B cell (primary cell): ENCODE measurements at regions of chr10 and their contacts with region 1.

Region 1: DNA sequence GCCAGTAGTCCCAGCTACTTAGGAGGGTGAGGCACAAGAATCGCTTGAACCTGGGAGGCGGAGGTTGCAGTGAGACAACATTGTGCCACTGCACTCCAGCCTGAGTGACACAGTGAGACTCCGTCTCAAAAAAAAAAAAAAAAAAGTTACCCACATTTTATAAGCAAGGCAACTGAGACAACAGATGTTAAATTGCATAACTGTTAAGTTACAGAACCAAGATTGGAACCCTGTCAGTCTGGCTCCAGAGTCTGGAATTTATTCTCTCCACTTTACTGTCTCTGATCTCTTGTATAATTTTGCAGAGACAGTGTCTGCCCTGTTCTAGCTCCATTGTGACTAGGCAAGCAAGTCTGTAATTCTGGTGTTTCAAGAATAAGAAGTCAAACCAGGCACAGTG is 6.2 kb upstream of the ITGB1 start:
- DNase-seq: no peak
- ATAC-seq: no peak
- H3K4me3 ChIP-seq: no peak overlapping the region
- H3K4me3 Mint-ChIP-seq: no peak overlapping the region
- H3K27ac ChIP-seq: no peak overlapping the region
- H3K27ac Mint-ChIP-seq: no peak overlapping the region
- H3K4me1 ChIP-seq: peaks cover 16 to 22% of the 10 kb centered on the region in 2 donors
- H3K4me1 Mint-ChIP-seq: peaks cover 31% of the 10 kb centered on the region
- H3K27me3 ChIP-seq: no peaks in the 10 kb centered on the region
- H3K27me3 Mint-ChIP-seq: no peaks in the 10 kb centered on the region
- CTCF ChIP-seq: no peak

Region 2: GRCh38 chr10:32445740-32446535 is 518.3 kb before region 1 on chr10 and contains the start of gene CCDC7:
- CTCF ChIA-PET with region 1: no interaction called
- POLR2A ChIA-PET with region 1: no interaction called
- intact Hi-C with region 1: no loop called
- DNase-seq: peak; percentile 93
- ATAC-seq: peak; percentile 99
- H3K4me3 ChIP-seq: peak within 1 kb of the TSS; percentile 93 to 99 (median 98)
- H3K4me3 Mint-ChIP-seq: peak within 1 kb of the TSS; percentile 98
- H3K27ac ChIP-seq: peak within 1 kb of the TSS; percentile 95 to 99
- H3K27ac Mint-ChIP-seq: peak within 1 kb of the TSS; percentile 100
- H3K4me1 ChIP-seq: peaks cover 7 to 8% of the 10 kb centered on the region in 2 donors
- H3K4me1 Mint-ChIP-seq: peaks cover 13% of the 10 kb centered on the region
- H3K27me3 ChIP-seq: peaks cover 0 to 4% (median 0%) of the 10 kb centered on the region in 4 experiments
- H3K27me3 Mint-ChIP-seq: peaks cover 16% of the 10 kb centered on the region
- CTCF ChIP-seq: peak; percentile 65
- total RNA-seq, gene CCDC7: 23.5 and 26.6 TPM in 2 replicates

Region 3: DNA sequence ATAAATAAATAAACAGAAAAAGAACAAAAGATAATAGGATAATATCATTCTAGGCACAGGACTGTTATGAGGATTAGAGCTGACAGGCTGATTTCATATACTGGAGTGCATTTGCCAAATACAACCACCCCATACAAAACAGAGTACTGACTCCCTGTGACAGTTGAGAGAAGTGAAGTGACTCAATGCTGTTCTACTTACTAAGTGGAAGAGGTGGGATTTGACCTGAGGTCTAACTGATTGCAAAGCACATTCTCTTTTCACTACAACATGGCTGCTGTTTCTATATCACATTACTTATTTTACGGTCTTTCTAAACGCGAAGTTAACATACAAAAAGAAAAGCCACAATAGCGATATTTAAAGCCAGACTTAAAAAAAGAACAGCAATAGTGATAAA is 57.7 kb before region 1 on chr10:
- CTCF ChIA-PET with region 1: no interaction called
- POLR2A ChIA-PET with region 1: no interaction called
- intact Hi-C with region 1: no loop called
- DNase-seq: no peak
- ATAC-seq: no peak
- H3K4me3 ChIP-seq: no peak overlapping the region
- H3K4me3 Mint-ChIP-seq: no peak overlapping the region
- H3K27ac ChIP-seq: no peak overlapping the region
- H3K27ac Mint-ChIP-seq: no peak overlapping the region
- H3K4me1 ChIP-seq: no peaks in the 10 kb centered on the region
- H3K4me1 Mint-ChIP-seq: no peaks in the 10 kb centered on the region
- H3K27me3 ChIP-seq: no peaks in the 10 kb centered on the region
- H3K27me3 Mint-ChIP-seq: no peaks in the 10 kb centered on the region
- CTCF ChIP-seq: no peak

Region 4: GRCh38 chr10:33025039-33025438 is 60.8 kb after region 1 on chr10:
- CTCF ChIA-PET with region 1: interaction called, 4 read pairs
- POLR2A ChIA-PET with region 1: interaction called, 11 read pairs
- intact Hi-C with region 1: no loop called
- DNase-seq: no peak
- ATAC-seq: no peak
- H3K4me3 ChIP-seq: no peak overlapping the region
- H3K4me3 Mint-ChIP-seq: no peak overlapping the region
- H3K27ac ChIP-seq: no peak overlapping the region
- H3K27ac Mint-ChIP-seq: no peak overlapping the region
- H3K4me1 ChIP-seq: peaks cover 0 to 5% of the 10 kb centered on the region in 2 donors
- H3K4me1 Mint-ChIP-seq: peaks cover 23% of the 10 kb centered on the region
- H3K27me3 ChIP-seq: no peaks in the 10 kb centered on the region
- H3K27me3 Mint-ChIP-seq: no peaks in the 10 kb centered on the region
- CTCF ChIP-seq: no peak